Caco-2 (cell line): ENCODE measurements at regions of chr14 and their contacts with region 1.

Region 1: GRCh38 chr14:32252030-32252670 is 49.1 kb upstream of the RNU6-8 start:
- DNase-seq: peak; percentile 65 to 78
- H3K4me3 ChIP-seq: no peak overlapping the region
- H3K4me3 Mint-ChIP-seq: no peak overlapping the region
- H3K27ac Mint-ChIP-seq: no peak overlapping the region
- H3K4me1 ChIP-seq: peaks cover 5% of the 10 kb centered on the region
- H3K4me1 Mint-ChIP-seq: no peaks in the 10 kb centered on the region
- H3K27me3 ChIP-seq: no peaks in the 10 kb centered on the region
- H3K27me3 Mint-ChIP-seq: no peaks in the 10 kb centered on the region
- CTCF ChIP-seq: peak; percentile 60 to 85

Region 2: DNA sequence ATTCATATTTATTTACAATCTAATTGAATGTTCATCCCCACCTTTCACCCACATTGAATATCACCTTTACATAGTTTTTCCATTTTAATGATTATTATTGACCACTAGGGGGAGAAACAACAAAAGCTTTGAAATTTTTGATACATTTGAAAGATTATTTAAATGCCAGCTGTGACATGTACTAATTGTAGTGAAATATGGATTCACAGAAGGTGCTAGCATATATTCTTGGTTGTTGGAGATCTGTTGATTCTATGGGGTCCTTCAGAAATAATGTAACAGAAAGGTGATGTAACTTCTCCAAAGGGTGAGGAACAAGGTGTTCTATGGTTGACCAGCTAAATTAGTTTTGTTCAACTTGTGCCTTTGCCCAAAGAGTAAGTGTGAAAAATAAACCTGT is 741.9 kb before region 1 on chr14:
- CTCF ChIA-PET with region 1: interaction called, 8 read pairs
- POLR2A ChIA-PET with region 1: no interaction called
- intact Hi-C with region 1: loop called (anchors 2 kb)
- DNase-seq: no peak
- H3K4me3 ChIP-seq: no peak overlapping the region
- H3K4me3 Mint-ChIP-seq: no peak overlapping the region
- H3K27ac Mint-ChIP-seq: no peak overlapping the region
- H3K4me1 ChIP-seq: no peaks in the 10 kb centered on the region
- H3K4me1 Mint-ChIP-seq: no peaks in the 10 kb centered on the region
- H3K27me3 ChIP-seq: no peaks in the 10 kb centered on the region
- H3K27me3 Mint-ChIP-seq: peaks cover 7% of the 10 kb centered on the region
- CTCF ChIP-seq: peak; percentile 48 to 51

Region 3: GRCh38 chr14:31937721-31938346 is 314.3 kb before region 1 on chr14:
- CTCF ChIA-PET with region 1: interaction called, 14 read pairs
- POLR2A ChIA-PET with region 1: no interaction called
- intact Hi-C with region 1: loop called (anchors 1 kb)
- DNase-seq: peak; percentile 48 to 70
- H3K4me3 ChIP-seq: no peak overlapping the region
- H3K4me3 Mint-ChIP-seq: no peak overlapping the region
- H3K27ac Mint-ChIP-seq: peak overlapping the region; percentile 84
- H3K4me1 ChIP-seq: peaks cover 55% of the 10 kb centered on the region
- H3K4me1 Mint-ChIP-seq: peaks cover 42% of the 10 kb centered on the region
- H3K27me3 ChIP-seq: no peaks in the 10 kb centered on the region
- H3K27me3 Mint-ChIP-seq: no peaks in the 10 kb centered on the region
- CTCF ChIP-seq: no peak

Region 4: DNA sequence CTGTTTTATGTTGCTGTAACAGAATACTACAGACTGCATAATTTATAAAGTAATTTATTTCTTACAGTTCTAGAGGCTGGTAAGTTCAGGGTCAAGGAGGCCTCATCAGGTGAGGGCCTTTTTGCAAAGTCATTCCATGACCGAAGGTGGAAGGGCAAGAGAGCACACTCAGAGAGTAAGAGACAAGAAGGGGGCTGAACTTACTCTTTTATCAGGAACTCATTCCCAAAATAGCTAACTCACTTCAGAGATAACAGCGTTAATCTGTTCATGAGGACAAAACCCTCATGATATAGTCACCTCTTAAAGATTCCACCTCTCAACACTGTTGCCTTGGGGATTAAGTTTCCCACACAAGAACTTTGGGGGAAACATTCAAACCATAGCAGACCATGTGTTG is 101.8 kb before region 1 on chr14:
- CTCF ChIA-PET with region 1: no interaction called
- POLR2A ChIA-PET with region 1: no interaction called
- intact Hi-C with region 1: loop called (anchors 10 kb)
- DNase-seq: peak in 1 of 2 experiments; percentile 31
- H3K4me3 ChIP-seq: no peak overlapping the region
- H3K4me3 Mint-ChIP-seq: no peak overlapping the region
- H3K27ac Mint-ChIP-seq: peak overlapping the region; percentile 45
- H3K4me1 ChIP-seq: peaks cover 14% of the 10 kb centered on the region
- H3K4me1 Mint-ChIP-seq: no peaks in the 10 kb centered on the region
- H3K27me3 ChIP-seq: no peaks in the 10 kb centered on the region
- H3K27me3 Mint-ChIP-seq: no peaks in the 10 kb centered on the region
- CTCF ChIP-seq: no peak

Region 5: DNA sequence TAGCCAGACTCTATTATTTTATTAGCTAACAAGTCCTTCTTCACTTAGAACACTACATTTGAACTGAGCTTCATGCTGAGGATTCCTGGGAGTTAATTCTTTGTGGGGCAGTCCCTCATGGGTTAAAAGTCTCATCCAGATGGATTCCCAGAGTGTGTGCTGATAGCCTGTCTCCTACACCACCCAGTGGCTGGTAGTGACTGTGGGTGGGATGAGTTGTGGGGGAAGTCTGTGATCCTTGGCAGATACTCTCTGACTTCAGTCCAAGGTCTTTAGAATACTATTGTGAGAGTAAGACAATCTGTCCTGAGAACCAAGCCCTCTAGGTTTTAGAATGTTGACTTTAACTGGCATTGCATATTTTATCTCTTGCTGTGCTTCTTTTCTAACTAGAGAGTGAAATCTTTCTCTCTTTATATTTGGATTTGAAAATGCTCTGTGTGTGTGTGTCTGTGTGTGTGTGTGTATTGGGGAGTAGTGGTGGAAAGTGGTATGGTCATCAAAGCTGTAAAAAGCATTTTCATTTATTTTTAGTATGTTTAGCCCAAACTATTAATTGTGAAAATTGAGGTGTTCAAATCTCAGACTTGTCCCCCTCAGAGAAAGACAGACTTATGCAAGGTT is 114.2 kb after region 1 on chr14:
- CTCF ChIA-PET with region 1: no interaction called
- POLR2A ChIA-PET with region 1: no interaction called
- intact Hi-C with region 1: loop called (anchors 1 kb)
- DNase-seq: peak in 1 of 2 experiments; percentile 43
- H3K4me3 ChIP-seq: no peak overlapping the region
- H3K4me3 Mint-ChIP-seq: no peak overlapping the region
- H3K27ac Mint-ChIP-seq: peak overlapping the region; percentile 34
- H3K4me1 ChIP-seq: peaks cover 10% of the 10 kb centered on the region
- H3K4me1 Mint-ChIP-seq: peaks cover 32% of the 10 kb centered on the region
- H3K27me3 ChIP-seq: no peaks in the 10 kb centered on the region
- H3K27me3 Mint-ChIP-seq: no peaks in the 10 kb centered on the region
- CTCF ChIP-seq: peak in 1 of 2 experiments; percentile 42

Region 6: GRCh38 chr14:32443890-32444661 is 191.9 kb after region 1 on chr14:
- CTCF ChIA-PET with region 1: no interaction called
- POLR2A ChIA-PET with region 1: no interaction called
- intact Hi-C with region 1: no loop called
- DNase-seq: no peak
- H3K4me3 ChIP-seq: no peak overlapping the region
- H3K4me3 Mint-ChIP-seq: no peak overlapping the region
- H3K27ac Mint-ChIP-seq: no peak overlapping the region
- H3K4me1 ChIP-seq: no peaks in the 10 kb centered on the region
- H3K4me1 Mint-ChIP-seq: no peaks in the 10 kb centered on the region
- H3K27me3 ChIP-seq: no peaks in the 10 kb centered on the region
- H3K27me3 Mint-ChIP-seq: no peaks in the 10 kb centered on the region
- CTCF ChIP-seq: no peak

Region 7: DNA sequence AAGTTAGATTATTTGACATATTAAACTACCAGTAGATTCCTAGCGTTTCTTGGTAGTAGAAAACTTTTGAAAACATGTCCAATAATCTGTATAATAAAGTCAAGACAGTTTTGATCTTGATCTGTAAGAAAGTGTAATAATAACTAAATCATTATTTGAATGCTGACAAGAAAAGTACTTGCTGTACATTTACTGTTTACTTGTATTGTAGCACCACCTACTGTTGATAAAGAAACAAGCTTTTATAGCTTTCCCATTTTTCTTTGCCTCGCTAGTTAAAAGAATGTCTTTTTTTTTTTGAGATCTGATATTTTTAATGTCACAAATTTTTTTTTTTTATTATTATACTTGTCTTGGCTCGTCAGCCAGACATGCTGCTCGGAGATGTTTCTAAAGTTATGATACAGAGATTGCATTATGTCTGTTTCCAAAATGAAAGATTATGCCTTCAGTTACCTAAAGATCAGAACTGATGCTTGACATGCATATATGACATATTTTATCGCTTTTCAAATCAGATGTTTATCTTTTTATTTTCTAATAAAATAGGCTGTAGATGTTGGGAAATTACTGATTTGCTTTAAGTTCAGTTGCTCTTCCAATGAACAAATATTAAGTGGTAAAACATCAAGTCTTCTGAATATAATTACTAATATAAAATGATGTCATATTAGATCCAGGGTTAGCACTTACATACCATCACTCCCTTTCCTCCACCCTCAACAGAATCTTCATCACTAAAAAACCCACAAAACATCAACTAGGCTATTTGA is 217.4 kb after region 1 on chr14:
- CTCF ChIA-PET with region 1: interaction called, 17 read pairs
- POLR2A ChIA-PET with region 1: no interaction called
- intact Hi-C with region 1: loop called (anchors 1 kb)
- DNase-seq: no peak
- H3K4me3 ChIP-seq: no peak overlapping the region
- H3K4me3 Mint-ChIP-seq: no peak overlapping the region
- H3K27ac Mint-ChIP-seq: no peak overlapping the region
- H3K4me1 ChIP-seq: peaks cover 39% of the 10 kb centered on the region
- H3K4me1 Mint-ChIP-seq: peaks cover 31% of the 10 kb centered on the region
- H3K27me3 ChIP-seq: no peaks in the 10 kb centered on the region
- H3K27me3 Mint-ChIP-seq: no peaks in the 10 kb centered on the region
- CTCF ChIP-seq: peak; percentile 41 to 51